Aorta (tissue), 5 donors: ENCODE measurements at regions of chr2 and their contacts with region 1.

Region 1: GRCh38 chr2:97697252-97698235 is 15.8 kb upstream of the ZAP70 start:
- DNase-seq: peak; percentile 91 to 97
- ATAC-seq: peak; percentile 93
- H3K4me3 ChIP-seq: no peak overlapping the region
- H3K27ac ChIP-seq: no peak overlapping the region
- H3K4me1 ChIP-seq: no peaks in the 10 kb centered on the region
- H3K27me3 ChIP-seq: no peaks in the 10 kb centered on the region

Region 2: DNA sequence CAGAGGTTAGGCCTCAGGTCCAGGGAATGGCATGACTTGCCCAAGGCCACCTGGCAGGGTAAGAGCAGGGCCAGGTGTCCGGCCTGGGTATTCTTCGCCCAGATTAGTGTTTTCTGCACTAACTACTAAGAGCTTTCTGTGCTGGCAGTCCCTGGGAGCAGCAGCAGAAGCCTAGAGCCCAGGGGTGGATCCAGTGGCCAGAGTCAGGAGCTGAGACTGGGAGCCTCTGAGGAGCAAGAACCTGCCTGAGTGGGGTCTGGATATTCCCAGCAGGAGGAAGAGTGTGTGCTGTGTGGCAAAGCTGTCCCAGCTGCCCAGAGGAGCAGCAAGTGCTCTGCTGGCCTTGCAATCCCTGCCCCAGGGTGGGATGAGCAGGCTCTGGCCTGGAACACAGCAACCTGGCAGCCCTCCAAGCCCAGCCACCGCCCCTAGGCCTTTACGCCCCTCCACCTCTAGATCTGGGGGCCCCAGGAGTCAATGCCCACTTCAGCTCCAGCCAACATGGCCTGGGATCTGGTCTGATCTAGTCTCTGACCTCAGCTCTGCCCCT is 1632.1 kb before region 1 on chr2:
- intact Hi-C with region 1: loop called in 1 of 2 experiments (anchors 10 kb)
- DNase-seq: peak in 1 of 2 donors; percentile 24
- ATAC-seq: no peak
- H3K4me3 ChIP-seq: no peak overlapping the region
- H3K27ac ChIP-seq: no peak overlapping the region
- H3K4me1 ChIP-seq: no peaks in the 10 kb centered on the region
- H3K27me3 ChIP-seq: no peaks in the 10 kb centered on the region

Region 3: DNA sequence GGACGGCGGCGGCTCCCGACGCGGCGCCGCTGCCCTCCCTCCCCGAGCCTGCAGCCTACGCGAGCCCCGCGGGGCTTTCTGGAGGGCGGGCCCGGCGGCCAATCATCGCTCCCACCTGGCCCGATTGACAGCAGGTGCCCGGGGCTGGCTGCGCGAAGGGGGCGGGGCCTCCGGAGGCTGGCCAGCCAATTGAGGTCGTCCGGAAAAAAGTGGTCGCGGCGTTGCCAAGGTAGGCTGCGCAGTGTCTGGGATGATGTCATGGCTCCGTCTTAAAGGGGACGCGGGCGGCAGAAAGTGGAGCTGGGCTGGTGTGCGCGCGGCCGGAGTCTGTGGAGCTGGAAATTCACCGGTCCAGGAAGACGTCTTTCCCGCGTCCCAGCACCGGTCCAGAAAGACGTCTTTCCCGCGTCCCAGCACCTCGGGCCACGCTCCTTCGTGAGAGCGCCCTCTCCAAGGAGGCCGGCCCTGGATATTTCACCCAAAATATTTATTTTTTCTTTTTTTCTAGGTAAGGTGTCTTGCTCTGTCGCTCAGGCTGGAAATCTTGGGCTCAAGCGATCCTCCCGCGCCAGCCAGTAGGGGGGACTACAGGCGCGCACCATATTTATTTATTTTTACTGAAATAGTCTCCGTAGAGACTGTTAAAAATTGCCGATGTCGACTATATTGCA is 33.4 kb before region 1 on chr2 and contains the start of gene ACTR1B:
- intact Hi-C with region 1: loop called in 1 of 2 experiments (anchors 1 kb)
- DNase-seq: peak; percentile 98
- ATAC-seq: peak; percentile 97
- H3K4me3 ChIP-seq: peak within 1 kb of the TSS; percentile 77 to 81
- H3K27ac ChIP-seq: peak within 1 kb of the TSS; percentile 80 to 91
- H3K4me1 ChIP-seq: no peaks in the 10 kb centered on the region
- H3K27me3 ChIP-seq: no peaks in the 10 kb centered on the region
- total RNA-seq, gene ACTR1B: 70.6 to 74.4 TPM

Region 4: DNA sequence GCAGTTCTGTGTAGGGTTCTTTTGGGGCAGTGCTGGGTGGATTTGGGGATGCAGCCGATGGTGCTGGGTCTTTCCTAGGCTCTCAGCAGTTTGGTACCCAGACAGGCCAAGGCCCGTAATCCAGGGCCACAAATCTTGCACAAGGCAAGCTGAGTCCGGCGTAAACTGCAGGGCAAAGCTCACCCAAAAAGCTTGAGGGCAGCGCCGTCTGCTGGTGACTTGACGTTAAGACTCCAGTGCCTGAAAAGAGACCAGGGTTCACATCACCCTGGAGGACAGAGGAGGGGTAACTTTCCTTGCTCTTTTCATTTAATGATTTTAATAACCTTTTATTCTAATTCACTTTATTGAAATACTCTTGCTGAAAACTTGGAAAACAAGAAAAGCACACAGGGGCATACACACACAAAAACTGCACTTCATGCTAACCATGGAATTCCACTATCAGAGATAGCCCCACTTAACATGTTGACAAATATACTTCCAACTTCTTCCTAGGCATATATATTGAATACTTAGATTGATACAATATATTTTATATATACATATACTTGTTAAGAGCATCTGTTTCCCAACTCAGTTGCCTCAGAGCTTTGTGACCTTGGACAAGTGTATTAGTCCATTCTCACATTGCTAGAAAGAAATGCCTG is 687.6 kb after region 1 on chr2:
- intact Hi-C with region 1: loop called in 1 of 2 experiments (anchors 10 kb)
- DNase-seq: peak; percentile 84 to 92
- ATAC-seq: peak; percentile 79
- H3K4me3 ChIP-seq: no peak overlapping the region
- H3K27ac ChIP-seq: no peak overlapping the region
- H3K4me1 ChIP-seq: no peaks in the 10 kb centered on the region
- H3K27me3 ChIP-seq: no peaks in the 10 kb centered on the region